ENCODE measurements at regions of chr12 and their contacts with region 1.

Region 1: DNA sequence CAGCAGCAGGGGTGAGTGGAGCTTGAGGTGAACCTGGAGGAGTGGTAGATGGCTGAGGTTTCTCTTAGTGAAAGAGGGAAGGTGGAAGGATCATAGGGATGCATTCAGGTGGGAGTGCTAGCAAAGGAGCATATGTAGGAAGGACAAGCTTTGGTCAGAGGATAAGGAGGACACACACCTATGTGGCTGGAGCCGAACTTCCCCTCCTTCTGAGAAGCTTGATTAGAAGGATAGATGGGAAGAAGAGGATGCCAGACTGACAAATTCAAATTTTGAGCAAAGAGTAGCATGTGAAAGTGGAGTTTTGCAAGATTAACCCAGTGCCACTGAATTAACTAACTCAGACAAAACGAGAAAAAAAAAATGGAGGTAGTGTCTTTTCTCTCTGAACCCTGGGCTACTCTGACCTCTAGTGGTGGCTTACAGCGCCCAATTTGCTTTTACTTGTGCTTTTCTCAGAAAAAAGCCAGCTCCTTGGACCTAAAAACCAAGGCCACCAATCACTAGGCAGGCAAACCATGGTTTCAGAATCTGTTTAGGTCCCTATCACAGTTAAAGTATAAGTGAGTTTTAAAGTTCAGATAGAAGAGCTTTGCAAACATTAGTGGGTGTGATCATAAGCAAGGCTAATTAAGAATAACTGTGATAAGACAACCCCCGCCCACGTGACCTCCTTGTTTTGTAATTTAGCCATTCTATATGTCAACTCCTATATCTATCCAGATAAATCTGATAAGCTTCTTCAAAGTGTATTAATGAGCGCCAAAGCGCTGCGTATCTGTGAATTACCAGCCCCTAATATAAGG is 15.5 kb downstream of the EMP1 start:
- DNase-seq: peak; percentile 35
- ATAC-seq: peak; percentile 25 to 42

Region 2: DNA sequence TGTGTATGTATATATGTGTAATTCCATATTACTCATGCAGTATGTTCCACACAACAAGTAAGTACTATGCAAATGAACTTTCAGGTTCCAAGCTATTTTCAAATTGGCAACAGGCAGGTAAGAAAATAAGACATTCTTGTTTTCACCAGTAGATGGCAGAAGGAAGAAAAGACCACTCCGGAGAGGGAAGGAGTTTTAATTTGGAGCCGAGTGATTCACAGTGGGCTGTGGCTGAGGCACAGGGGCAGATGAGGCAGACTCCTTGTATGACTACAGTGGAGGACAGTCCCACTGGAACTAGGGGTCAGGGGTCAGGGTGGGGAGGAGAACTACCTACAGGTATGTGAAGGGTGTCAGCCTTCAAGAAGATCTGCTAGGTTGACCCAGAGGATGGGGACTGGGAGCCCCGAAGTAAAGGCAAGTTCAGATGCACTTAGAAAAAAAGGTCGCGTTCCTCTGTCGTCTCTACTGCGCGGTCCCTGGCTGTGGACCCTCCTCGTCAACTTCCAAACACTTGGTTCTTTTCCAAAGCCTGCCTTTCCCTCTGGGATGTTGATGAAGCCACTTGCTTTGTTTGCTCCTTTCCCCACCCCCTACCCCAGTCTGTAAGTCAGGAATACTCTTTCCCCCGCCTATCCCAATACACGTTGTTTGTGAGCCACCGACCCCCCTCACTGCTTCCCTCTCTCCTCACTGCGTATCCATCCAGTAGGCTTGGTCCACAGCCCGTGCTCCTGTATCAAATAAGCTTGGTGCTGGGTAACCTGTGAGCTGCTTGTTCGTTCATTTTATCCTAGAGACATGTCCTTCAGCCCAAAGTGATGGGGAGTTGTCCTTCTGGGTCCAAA is 374.8 kb before region 1 on chr12:
- intact Hi-C with region 1: loop called in 1 of 2 experiments (anchors 10 kb)
- DNase-seq: peak; percentile 36
- ATAC-seq: peak; percentile 65 to 92

Region 3: DNA sequence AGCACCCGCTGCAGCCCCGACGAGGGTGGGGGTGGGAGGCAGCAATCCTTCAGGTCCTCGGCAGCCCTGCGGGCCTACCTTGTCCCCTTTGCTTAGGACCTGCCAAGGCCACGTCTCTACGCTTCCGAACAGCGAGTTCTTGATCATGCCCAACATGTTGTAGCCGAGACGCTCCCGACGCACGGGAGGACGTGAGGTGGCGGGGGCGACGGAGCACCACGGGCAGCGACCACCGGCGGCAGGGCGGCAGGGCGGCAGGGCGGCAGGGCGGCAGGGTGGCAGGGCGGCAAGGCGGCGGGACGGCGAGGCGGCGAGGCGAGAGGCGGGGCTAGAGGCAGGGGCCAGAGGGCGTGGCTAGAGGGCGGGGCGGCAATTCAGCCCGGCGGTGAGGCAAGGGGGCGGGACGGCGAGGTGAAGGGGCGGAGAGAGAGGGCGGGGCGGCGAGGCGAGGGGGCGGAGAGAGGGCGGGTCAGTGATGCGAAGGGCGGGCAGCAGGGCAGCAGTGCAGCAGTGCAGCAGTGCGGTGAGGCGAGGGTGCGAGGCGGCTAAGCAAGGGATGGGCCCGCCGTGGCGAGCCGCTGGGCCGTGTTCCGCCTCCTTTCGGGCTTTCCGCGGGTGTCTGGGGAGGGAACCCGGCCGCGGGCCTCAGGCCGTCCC is 212.0 kb before region 1 on chr12 and contains the start of gene HEBP1:
- intact Hi-C with region 1: loop called in 1 of 2 experiments (anchors 5 kb)
- DNase-seq: peak; percentile 96
- ATAC-seq: peak; percentile 95 to 97
- total RNA-seq, gene HEBP1: 57.5 to 65.1 TPM

Region 4: GRCh38 chr12:13100882-13101769 is 110.9 kb before region 1 on chr12:
- intact Hi-C with region 1: no loop called
- DNase-seq: peak; percentile 95
- ATAC-seq: peak; percentile 87 to 90

Region 5: DNA sequence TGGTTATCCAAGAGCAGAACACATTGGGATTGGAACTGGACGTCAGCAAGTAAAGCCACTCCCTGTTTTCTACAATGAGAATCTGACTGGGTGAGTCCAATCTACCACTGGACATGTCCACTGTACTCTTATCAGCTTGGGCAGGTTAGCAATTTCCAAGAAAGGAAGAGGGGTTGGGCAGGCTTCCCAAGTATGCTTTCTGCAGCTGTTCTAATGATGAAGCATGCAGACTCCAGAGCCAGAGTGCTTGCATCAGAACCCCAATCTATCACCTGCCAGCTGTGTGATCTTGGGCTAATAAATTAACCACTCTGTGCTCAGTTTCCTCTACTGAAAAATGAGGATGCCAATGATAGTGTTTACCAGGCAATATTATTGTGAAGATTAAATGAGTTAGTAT is 76.4 kb after region 1 on chr12:
- intact Hi-C with region 1: no loop called
- DNase-seq: no peak
- ATAC-seq: peak in 1 of 2 donors; percentile 73

Region 6: DNA sequence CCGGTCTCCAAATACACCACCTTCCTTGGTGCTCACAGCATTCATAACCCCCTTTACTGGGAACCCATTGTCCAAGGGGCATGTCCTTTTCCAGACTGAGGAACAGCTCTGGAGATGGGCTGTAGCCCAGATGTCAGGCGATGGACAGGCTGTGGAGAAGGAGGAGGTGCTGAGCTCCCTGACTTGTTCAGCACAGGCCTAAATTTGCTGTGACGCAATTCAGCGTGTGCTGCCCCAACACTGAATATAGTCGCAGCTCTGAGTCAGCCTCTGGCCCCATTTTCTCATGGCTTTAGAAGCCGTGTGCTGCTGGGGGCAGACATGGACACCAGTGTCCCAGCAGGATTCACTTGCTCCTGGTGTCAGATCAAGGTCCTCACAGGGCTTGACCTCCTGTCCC is 253.6 kb after region 1 on chr12:
- intact Hi-C with region 1: no loop called
- DNase-seq: peak; percentile 62
- ATAC-seq: peak; percentile 87 to 93